Right ventricle myocardium inferior (tissue), 1 donor: ENCODE measurements at regions of chrX and their contacts with region 1.

Region 1: DNA sequence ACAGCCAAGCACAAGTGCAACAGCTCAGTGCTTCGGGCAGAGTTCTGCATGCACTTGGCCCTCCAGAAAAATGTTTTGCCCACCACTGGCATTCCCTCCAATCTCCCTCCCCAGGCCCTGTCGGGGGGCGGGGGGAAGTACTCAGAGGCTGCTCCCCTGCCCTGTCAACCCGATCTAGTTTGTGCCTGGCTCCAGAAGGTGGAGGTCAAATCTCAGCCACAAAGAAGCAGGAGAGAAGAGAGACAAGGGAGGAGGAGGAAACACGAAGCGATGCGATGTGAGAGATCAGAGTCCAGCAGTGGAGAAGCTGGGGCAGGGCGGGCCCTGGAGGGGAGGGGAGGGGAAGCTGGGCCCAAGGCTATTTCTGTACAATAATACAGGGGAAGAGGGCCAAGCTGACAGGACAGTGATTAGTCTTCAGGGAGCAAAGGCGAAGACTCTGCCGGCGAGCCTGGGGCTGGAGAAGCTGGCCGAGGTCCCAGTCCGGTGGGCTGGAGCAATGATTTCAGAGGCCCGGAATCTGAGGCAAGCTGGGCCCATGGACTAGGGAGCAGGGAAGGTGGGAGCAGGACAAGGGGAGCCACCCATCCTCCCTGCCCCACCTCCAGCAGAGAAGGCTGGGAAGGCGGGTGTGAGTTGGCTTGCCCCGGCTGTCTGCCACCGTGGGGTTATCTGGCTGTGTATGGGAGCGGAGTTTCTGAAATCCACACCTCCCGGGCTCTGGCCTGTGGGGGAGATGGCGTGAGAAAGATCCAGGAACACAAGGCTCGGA is 167.1 kb downstream of the EFNB1 start:
- DNase-seq: peak; percentile 73
- ATAC-seq: peak; percentile 85

Region 2: DNA sequence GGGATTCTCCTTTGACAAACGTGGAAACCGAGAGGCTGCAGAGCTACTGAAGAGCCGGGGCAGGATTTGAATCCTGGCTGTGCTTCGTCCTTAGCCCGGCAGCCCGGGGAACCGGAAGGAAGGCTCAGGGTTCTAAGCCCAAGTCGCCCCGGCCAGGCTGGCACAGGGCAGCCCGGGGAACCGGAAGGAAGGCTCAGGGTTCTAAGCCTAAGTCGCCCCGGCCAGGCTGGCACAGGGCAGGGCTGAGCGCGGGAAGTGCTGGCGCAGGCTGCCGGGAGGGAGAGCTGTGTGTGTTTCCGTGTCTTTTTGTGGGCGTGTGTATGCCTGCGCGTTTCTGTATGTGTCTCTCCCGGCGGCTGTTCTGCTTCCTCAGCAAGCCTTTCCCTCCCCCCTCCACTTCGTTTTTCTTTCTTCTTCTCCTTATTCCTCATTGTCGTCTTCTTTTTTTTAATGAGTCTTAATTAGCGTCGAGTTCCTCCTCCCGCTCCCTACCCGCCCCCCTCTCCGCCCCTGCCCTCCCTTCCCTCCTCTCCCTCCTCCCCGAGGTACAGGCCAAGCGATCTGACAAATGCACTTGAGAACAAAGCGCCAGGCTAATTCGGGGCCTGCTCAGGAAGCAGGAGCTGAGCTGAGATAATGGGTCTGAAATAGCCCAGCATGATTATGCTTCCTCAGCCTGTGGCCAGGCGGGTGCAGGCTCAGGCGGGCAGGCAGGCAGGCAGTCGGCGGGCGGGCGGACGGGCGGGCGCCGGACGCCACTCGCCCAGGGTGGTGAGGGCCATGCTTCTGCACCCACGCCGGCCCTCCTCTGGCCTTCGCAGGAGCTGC is 101.2 kb before region 1 on chrX:
- intact Hi-C with region 1: loop called (anchors 2 kb)
- DNase-seq: peak; percentile 80
- ATAC-seq: peak; percentile 89

Region 3: GRCh38 chrX:68929332-68930150 is 66.4 kb before region 1 on chrX:
- intact Hi-C with region 1: loop called (anchors 5 kb)
- DNase-seq: no peak
- ATAC-seq: peak; percentile 29

Region 4: GRCh38 chrX:69024931-69025330 is 29.0 kb after region 1 on chrX:
- intact Hi-C with region 1: loop called (anchors 2 kb)
- DNase-seq: peak; percentile 80
- ATAC-seq: peak; percentile 95